ENCODE measurements at regions of chr2 and their contacts with region 1.

Region 1: DNA sequence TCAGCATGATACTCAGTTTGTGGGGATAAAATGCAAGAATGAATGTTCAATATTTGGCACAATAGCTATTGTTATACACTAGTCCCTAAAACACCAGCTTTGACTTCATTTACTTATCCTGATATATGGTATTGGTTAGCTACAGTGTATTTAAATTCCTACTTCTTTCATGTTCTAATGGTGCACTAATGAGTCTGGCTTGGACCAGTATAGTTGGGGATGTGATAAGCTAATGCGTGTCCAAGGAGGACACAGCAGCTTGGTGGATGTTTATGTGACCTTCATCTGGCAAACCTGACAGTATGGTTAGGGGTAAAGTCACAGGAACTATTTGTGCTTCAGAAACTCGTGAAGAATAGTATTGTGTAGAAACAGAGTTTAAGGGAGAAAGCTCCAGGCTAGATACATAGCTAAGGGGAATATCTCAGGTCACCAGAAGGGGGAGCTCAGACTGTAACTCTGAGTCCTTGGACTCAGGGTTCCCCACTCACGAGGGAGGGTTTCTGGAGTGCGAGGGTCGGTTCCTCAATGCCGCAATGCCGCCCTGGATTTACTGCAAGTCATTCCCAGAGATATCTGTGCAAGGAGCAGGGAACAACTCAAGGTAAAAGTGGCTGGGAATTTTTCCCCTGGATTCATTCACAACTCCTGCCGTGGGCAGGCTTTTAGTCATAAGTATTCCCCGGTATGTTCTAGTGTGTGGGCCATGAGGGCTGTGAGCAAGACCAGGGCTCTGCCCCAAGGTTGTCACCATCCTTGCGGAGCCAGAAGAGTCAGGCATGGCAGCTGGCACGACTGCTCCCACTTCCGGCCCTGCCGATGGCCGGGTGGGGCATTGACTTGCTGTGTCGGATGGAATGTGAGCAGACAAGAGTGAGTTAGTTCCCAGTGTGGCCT is 14.5 kb downstream of the IL1R2 start:
- DNase-seq: no peak
- H3K4me3 Mint-ChIP-seq: no peak overlapping the region
- H3K27ac Mint-ChIP-seq: no peak overlapping the region
- H3K4me1 Mint-ChIP-seq: peaks cover 18% of the 10 kb centered on the region
- H3K27me3 Mint-ChIP-seq: no peaks in the 10 kb centered on the region

Region 2: GRCh38 chr2:101883863-101884262 is 122.4 kb before region 1 on chr2:
- CTCF ChIA-PET with region 1: interaction called, 14 read pairs
- POLR2A ChIA-PET with region 1: no interaction called
- DNase-seq: no peak
- H3K4me3 Mint-ChIP-seq: no peak overlapping the region
- H3K27ac Mint-ChIP-seq: no peak overlapping the region
- H3K4me1 Mint-ChIP-seq: no peaks in the 10 kb centered on the region
- H3K27me3 Mint-ChIP-seq: no peaks in the 10 kb centered on the region

Region 3: DNA sequence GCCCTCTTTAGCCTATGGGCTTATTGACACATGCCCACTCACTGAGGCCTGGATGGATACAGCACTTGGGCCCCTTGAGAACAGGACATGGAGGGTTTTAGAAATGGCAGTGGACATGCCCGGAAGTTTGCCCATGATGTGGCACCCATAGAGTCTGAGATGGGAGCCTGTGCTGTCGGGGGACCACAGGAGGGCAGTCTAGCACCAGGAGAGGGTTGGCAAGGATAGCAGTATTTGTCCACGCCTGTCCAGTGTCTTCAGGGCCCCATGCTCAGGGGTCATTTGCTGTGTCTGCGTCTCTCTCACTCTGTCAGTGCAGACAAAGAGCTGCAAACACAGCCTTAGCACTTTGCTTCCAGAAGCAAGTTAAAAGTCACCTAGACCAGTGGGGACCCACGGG is 229.3 kb after region 1 on chr2:
- CTCF ChIA-PET with region 1: interaction called, 91 read pairs
- POLR2A ChIA-PET with region 1: interaction called, 5 read pairs
- DNase-seq: peak; percentile 35
- H3K4me3 Mint-ChIP-seq: no peak overlapping the region
- H3K27ac Mint-ChIP-seq: no peak overlapping the region
- H3K4me1 Mint-ChIP-seq: peaks cover 41% of the 10 kb centered on the region
- H3K27me3 Mint-ChIP-seq: peaks cover 7% of the 10 kb centered on the region